Prostate gland (tissue), 2 donors: ENCODE measurements at regions of chr4 and their contacts with region 1.

Region 1: DNA sequence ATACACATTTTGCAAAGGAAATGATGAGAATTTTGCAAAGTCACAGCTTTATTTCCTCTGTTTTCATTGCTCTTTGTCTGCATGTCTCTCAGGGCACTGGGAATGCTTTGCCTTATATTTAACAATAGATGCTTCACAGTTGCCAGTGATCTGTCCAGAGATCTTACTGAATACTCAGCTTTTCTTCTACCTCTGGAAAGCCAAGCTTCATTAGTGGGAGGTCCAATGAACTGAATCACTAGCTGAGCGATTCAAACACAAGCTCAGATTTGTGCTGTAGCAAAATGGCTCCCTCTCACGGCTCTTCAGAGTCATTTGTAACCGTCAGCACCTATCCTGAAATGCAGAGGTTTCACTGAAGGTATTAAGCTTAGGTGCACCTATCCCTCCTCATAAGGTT is 138.9 kb downstream of the DCLK2 start:
- DNase-seq: no peak
- H3K4me3 ChIP-seq: no peak overlapping the region
- H3K27ac ChIP-seq: no peak overlapping the region
- H3K4me1 ChIP-seq: no peaks in the 10 kb centered on the region
- H3K27me3 ChIP-seq: no peaks in the 10 kb centered on the region
- CTCF ChIP-seq: peak in 1 of 4 experiments; percentile 35
- POLR2A ChIP-seq: no peak

Region 2: DNA sequence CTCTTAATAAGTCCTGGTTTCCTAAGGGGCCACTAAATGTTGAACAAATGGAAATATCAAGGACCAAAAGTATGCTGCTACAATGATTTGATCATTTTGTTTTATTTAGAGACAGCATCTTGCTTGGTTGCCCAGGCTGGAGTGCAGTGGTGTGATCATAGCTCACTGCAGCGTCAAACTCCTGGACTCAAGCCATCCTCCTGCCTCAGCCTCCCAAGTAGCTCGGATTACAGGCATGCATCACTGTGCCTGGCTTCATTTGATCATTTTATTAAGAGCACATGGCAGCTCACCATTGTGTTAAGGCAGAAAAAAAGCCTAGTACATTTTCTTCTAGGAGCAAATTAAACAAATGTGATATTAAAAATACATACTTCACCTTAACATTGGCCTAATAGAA is 86.3 kb before region 1 on chr4:
- intact Hi-C with region 1: loop called (anchors 10 kb)
- DNase-seq: no peak
- H3K4me3 ChIP-seq: no peak overlapping the region
- H3K27ac ChIP-seq: no peak overlapping the region
- H3K4me1 ChIP-seq: no peaks in the 10 kb centered on the region
- H3K27me3 ChIP-seq: no peaks in the 10 kb centered on the region
- CTCF ChIP-seq: no peak
- POLR2A ChIP-seq: no peak

Region 3: DNA sequence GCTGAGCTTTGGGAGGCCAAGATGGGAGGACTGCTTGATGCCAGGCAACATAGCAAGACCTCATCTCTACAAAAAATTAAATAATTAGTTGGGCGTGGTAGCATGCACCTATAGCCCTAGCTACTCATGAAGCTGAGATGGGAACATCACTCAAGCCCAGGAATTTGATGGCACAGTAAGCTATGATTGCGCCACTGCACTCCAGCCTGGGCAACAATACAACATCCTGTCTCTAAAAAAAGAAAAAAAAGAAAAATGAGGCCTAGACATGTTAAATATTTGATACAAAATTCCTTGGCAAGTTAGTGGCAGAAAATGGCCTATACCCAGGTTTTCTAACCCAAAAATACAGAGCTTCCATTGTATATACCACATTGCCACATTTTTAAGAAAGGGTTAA is 276.7 kb after region 1 on chr4:
- intact Hi-C with region 1: no loop called
- DNase-seq: no peak
- H3K4me3 ChIP-seq: no peak overlapping the region
- H3K27ac ChIP-seq: no peak overlapping the region
- H3K4me1 ChIP-seq: no peaks in the 10 kb centered on the region
- H3K27me3 ChIP-seq: no peaks in the 10 kb centered on the region
- CTCF ChIP-seq: no peak
- POLR2A ChIP-seq: no peak